ENCODE measurements at regions of chr14 and their contacts with region 1.

Region 1: GRCh38 chr14:24195191-24196070 is at the start of gene TM9SF1:
- DNase-seq: peak; percentile 97
- H3K4me3 ChIP-seq: peak within 1 kb of the TSS; percentile 82 to 89 (median 84)
- H3K27ac ChIP-seq: peak within 1 kb of the TSS; percentile 95 to 98 (median 96)
- H3K4me1 ChIP-seq: peaks cover 32 to 61% (median 45%) of the 10 kb centered on the region in 4 donors
- H3K27me3 ChIP-seq: no peaks in the 10 kb centered on the region
- CTCF ChIP-seq: no peak
- EP300 ChIP-seq: no peak
- POLR2A ChIP-seq: no peak
- total RNA-seq, gene TM9SF1: 27.0 to 44.6 (median 43.8) TPM

Region 2: DNA sequence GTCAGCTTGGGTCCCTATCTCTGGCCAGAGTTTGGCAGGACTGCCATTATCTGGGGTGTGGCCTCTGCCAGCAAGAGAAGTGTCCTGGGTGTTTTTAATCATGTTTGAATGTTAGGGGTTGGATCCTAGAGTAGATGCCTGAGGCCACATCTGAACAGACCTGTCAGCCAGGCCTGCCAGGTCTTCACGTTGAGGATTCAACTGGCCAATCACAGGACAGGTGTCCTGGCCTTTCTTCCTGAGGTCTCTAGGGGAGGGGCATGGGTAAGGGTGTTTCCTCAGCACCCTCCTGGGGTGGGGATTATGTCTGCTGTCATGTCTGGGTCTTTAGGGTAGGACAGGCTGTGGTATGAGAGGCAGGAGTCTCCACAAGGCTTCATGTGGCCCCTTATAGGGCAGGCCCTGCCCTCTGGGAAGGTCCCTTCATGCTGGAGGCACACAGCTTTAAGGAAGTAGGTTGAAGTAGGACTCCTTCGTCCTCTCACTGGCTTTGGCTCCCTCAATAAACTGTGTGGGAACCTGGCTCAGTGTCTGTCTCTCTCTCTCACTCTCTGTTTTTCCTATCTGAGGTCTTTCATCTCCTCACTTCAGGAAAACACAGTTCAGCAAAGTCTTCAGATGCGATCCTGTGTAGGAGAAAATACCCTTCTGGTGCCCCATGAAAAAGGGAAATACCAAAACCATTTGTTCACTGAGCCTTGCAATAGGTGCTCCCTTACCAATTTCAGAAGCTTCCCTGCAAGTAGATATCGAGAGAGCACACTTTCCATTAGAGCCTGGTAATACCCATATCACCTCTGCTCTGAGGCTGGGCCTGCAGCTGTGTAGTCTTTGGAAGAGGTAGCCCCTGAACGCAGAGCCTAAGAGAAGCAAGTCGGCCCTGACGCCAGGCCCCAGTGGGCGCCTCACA is 71.7 kb before region 1 on chr14:
- intact Hi-C with region 1: no loop called
- DNase-seq: no peak
- H3K4me3 ChIP-seq: no peak overlapping the region
- H3K27ac ChIP-seq: no peak overlapping the region
- H3K4me1 ChIP-seq: no peaks in the 10 kb centered on the region
- H3K27me3 ChIP-seq: no peaks in the 10 kb centered on the region
- CTCF ChIP-seq: no peak
- EP300 ChIP-seq: no peak
- POLR2A ChIP-seq: no peak

Region 3: GRCh38 chr14:24212924-24213865 is 17.8 kb after region 1 on chr14 and contains the start of gene CHMP4A:
- intact Hi-C with region 1: loop called (anchors 2 kb)
- DNase-seq: peak; percentile 100
- H3K4me3 ChIP-seq: peak within 1 kb of the TSS; percentile 75 to 97 (median 81)
- H3K27ac ChIP-seq: peak within 1 kb of the TSS; percentile 92 to 99 (median 96)
- H3K4me1 ChIP-seq: peaks cover 26 to 56% (median 43%) of the 10 kb centered on the region in 4 donors
- H3K27me3 ChIP-seq: peaks cover 0 to 6% (median 0%) of the 10 kb centered on the region in 4 donors
- CTCF ChIP-seq: peak in 1 of 3 experiments; percentile 26
- EP300 ChIP-seq: no peak
- POLR2A ChIP-seq: peak; percentile 89
- total RNA-seq, gene CHMP4A: 75.4 to 135 (median 94.9) TPM

Measured in esophagus muscularis mucosa (tissue), 4 donors.